ENCODE measurements at regions of chr4 and their contacts with region 1.

Region 1: GRCh38 chr4:16667464-16667863 is 231.0 kb downstream of the LDB2 start:
- DNase-seq: peak; percentile 68
- H3K4me3 ChIP-seq: no peak overlapping the region
- CTCF ChIP-seq: no peak

Region 2: GRCh38 chr4:16582532-16582931 is 84.9 kb before region 1 on chr4:
- in situ Hi-C with region 1: loop called (anchors 5 kb)
- DNase-seq: no peak
- H3K4me3 ChIP-seq: no peak overlapping the region
- CTCF ChIP-seq: no peak

Measured in astrocyte of the cerebellum (primary cell).